ENCODE measurements at regions of chr2 and their contacts with region 1.

Region 1: GRCh38 chr2:49515996-49516782 is 361.9 kb upstream of the FSHR start:
- DNase-seq: no peak
- H3K4me3 ChIP-seq: no peak overlapping the region
- H3K27ac ChIP-seq: no peak overlapping the region
- H3K4me1 ChIP-seq: no peaks in the 10 kb centered on the region
- H3K27me3 ChIP-seq: no peaks in the 10 kb centered on the region
- CTCF ChIP-seq: no peak
- EP300 ChIP-seq: no peak
- POLR2A ChIP-seq: no peak

Region 2: GRCh38 chr2:49351560-49351959 is 164.6 kb before region 1 on chr2:
- in situ Hi-C with region 1: no loop called
- intact Hi-C with region 1: loop called (anchors 5 kb)
- DNase-seq: no peak
- H3K4me3 ChIP-seq: no peak overlapping the region
- H3K27ac ChIP-seq: no peak overlapping the region
- H3K4me1 ChIP-seq: no peaks in the 10 kb centered on the region
- H3K27me3 ChIP-seq: no peaks in the 10 kb centered on the region
- CTCF ChIP-seq: no peak
- EP300 ChIP-seq: no peak
- POLR2A ChIP-seq: no peak

Region 3: DNA sequence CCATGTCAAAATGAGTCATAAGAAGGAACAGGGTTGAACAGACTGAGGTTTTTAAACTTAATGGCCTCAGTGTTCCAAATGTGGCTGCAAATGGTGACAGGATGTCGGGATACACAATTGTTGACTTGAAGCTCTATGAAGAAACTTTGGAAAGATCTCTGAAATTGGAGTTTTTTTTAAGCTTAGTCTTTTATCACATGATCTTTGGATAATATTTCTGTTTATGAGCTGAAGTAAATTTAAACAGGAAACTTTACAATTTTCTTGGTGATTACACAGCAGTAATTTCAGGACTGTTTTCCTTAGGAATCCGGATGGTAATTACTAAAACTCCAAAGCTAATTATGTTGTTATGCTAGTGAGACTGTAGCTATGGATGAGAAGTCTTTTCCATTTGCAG is 1714.9 kb after region 1 on chr2:
- in situ Hi-C with region 1: no loop called
- intact Hi-C with region 1: no loop called
- DNase-seq: no peak
- H3K4me3 ChIP-seq: no peak overlapping the region
- H3K27ac ChIP-seq: no peak overlapping the region
- H3K4me1 ChIP-seq: no peaks in the 10 kb centered on the region
- H3K27me3 ChIP-seq: no peaks in the 10 kb centered on the region
- CTCF ChIP-seq: no peak
- EP300 ChIP-seq: no peak
- POLR2A ChIP-seq: no peak